ENCODE measurements at regions of chr12 and their contacts with region 1.

Region 1: GRCh38 chr12:109995686-109996482 is at the start of gene GIT2:
- DNase-seq: peak; percentile 87 to 98 (median 94)
- ATAC-seq: peak; percentile 76
- H3K4me3 ChIP-seq: peak within 1 kb of the TSS; percentile 79 to 89
- H3K4me3 Mint-ChIP-seq: peak within 1 kb of the TSS; percentile 97
- H3K27ac ChIP-seq: peak within 1 kb of the TSS; percentile 70 to 85
- H3K27ac Mint-ChIP-seq: peak within 1 kb of the TSS; percentile 89
- H3K4me1 ChIP-seq: peaks cover 34% of the 10 kb centered on the region
- H3K4me1 Mint-ChIP-seq: peaks cover 71% of the 10 kb centered on the region
- H3K27me3 ChIP-seq: no peaks in the 10 kb centered on the region
- H3K27me3 Mint-ChIP-seq: no peaks in the 10 kb centered on the region
- CTCF ChIP-seq: no peak
- total RNA-seq, gene GIT2: 47.6 to 57.9 TPM

Region 2: GRCh38 chr12:108731105-108731865 is 1264.6 kb before region 1 on chr12 and contains the start of gene CORO1C:
- CTCF ChIA-PET with region 1: no interaction called
- POLR2A ChIA-PET with region 1: no interaction called
- intact Hi-C with region 1: loop called in 1 of 2 experiments (anchors 5 kb)
- DNase-seq: peak; percentile 86 to 97 (median 92)
- ATAC-seq: peak; percentile 75
- H3K4me3 ChIP-seq: peak within 1 kb of the TSS; percentile 91 to 93
- H3K4me3 Mint-ChIP-seq: peak within 1 kb of the TSS; percentile 94
- H3K27ac ChIP-seq: peak within 1 kb of the TSS; percentile 67 to 85
- H3K27ac Mint-ChIP-seq: peak within 1 kb of the TSS; percentile 86
- H3K4me1 ChIP-seq: peaks cover 7% of the 10 kb centered on the region
- H3K4me1 Mint-ChIP-seq: peaks cover 26% of the 10 kb centered on the region
- H3K27me3 ChIP-seq: no peaks in the 10 kb centered on the region
- H3K27me3 Mint-ChIP-seq: no peaks in the 10 kb centered on the region
- CTCF ChIP-seq: peak; percentile 74
- total RNA-seq, gene CORO1C: 10.3 to 15.4 TPM

Region 3: GRCh38 chr12:109052414-109053323 is 943.2 kb before region 1 on chr12 and contains the start of gene USP30:
- CTCF ChIA-PET with region 1: no interaction called
- POLR2A ChIA-PET with region 1: no interaction called
- intact Hi-C with region 1: loop called in 1 of 2 experiments (anchors 5 kb)
- DNase-seq: peak; percentile 73 to 93 (median 85)
- ATAC-seq: peak; percentile 74
- H3K4me3 ChIP-seq: peak within 1 kb of the TSS; percentile 85 to 90
- H3K4me3 Mint-ChIP-seq: peak within 1 kb of the TSS; percentile 89
- H3K27ac ChIP-seq: peak within 1 kb of the TSS; percentile 68 to 91
- H3K27ac Mint-ChIP-seq: peak within 1 kb of the TSS; percentile 96
- H3K4me1 ChIP-seq: peaks cover 7% of the 10 kb centered on the region
- H3K4me1 Mint-ChIP-seq: peaks cover 21% of the 10 kb centered on the region
- H3K27me3 ChIP-seq: no peaks in the 10 kb centered on the region
- H3K27me3 Mint-ChIP-seq: no peaks in the 10 kb centered on the region
- CTCF ChIP-seq: no peak
- total RNA-seq, gene USP30: 28.2 to 33.1 TPM

Region 4: DNA sequence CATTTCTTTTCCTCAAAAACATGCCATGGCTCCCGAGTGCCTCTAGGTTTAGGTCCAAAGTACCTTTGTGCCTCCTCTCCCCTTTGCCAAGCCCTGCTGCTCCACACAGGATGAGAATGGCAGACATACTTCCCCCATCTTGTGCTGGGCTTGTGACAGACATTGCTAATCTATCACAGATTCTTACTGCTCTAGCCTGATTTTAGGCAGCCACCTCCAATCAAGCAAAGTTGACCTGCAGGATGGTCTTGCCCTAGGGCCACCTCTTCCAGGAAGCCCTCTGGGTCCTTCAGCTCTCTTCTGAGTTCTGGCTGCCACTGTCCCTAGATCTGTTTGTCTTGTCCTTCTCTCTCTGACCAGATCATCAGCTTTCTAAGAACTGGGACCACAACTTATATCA is 707.3 kb before region 1 on chr12:
- CTCF ChIA-PET with region 1: no interaction called
- POLR2A ChIA-PET with region 1: no interaction called
- intact Hi-C with region 1: no loop called
- DNase-seq: no peak
- ATAC-seq: no peak
- H3K4me3 ChIP-seq: no peak overlapping the region
- H3K4me3 Mint-ChIP-seq: no peak overlapping the region
- H3K27ac ChIP-seq: no peak overlapping the region
- H3K27ac Mint-ChIP-seq: no peak overlapping the region
- H3K4me1 ChIP-seq: no peaks in the 10 kb centered on the region
- H3K4me1 Mint-ChIP-seq: no peaks in the 10 kb centered on the region
- H3K27me3 ChIP-seq: peaks cover 0 to 3% of the 10 kb centered on the region in 2 experiments
- H3K27me3 Mint-ChIP-seq: peaks cover 19% of the 10 kb centered on the region
- CTCF ChIP-seq: no peak

Region 5: DNA sequence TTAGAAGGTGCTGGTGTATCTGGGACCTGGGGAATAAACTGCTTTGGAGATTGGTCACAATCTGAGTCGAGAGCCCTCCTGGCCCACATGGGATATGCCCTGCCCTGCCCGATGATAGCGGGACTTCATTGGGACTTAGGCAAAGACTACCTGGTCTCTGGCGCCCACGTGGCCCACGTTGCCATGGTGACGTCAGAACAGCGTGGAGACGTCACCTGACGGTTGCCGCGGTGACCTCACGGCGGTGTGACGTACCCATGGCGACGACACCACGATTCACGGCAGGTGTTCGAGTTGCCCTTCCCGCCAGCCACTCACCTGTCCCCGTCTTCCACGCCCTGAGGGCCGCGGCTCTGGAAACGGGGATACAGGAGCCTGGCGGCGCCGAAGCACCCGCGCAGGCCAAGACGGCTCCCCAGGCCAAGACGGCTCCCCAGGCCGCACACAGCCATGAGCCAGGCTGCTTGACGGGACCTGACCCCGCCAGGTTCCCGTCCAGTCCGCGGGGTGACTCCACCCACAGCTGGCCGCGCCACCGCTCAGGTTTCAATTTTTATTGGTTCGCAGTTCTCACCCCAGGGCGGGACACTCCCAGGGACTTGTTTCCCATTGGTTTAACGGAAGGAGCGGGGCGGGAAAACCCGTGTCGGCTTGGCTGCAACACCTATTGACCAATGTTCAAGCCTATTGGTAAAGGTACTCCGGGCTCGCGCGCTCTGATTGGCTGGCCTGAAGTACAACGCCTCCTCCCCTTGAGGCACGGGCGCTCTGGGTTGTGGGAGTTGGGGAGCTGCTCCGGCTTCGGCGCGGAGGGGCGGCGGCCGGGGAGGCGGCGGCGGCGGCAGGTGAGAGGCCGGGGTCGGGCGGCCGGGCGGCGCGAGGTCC is 422.6 kb before region 1 on chr12 and contains the starts of genes MMAB and MVK:
- CTCF ChIA-PET with region 1: no interaction called
- POLR2A ChIA-PET with region 1: no interaction called
- intact Hi-C with region 1: loop called (anchors 2 to 5 kb)
- DNase-seq: peak; percentile 96 to 99 (median 98)
- ATAC-seq: peak; percentile 92
- H3K4me3 ChIP-seq: peak within 1 kb of the TSS; percentile 73 to 82
- H3K4me3 Mint-ChIP-seq: peak within 1 kb of the TSS; percentile 95
- H3K27ac ChIP-seq: peak within 1 kb of the TSS; percentile 95
- H3K27ac Mint-ChIP-seq: peak within 1 kb of the TSS; percentile 96
- H3K4me1 ChIP-seq: peaks cover 16% of the 10 kb centered on the region
- H3K4me1 Mint-ChIP-seq: peaks cover 35% of the 10 kb centered on the region
- H3K27me3 ChIP-seq: no peaks in the 10 kb centered on the region
- H3K27me3 Mint-ChIP-seq: no peaks in the 10 kb centered on the region
- CTCF ChIP-seq: no peak
- total RNA-seq, gene MMAB: 10.2 to 11.7 TPM
- total RNA-seq, gene MVK: 11.5 to 13.9 TPM

Region 6: DNA sequence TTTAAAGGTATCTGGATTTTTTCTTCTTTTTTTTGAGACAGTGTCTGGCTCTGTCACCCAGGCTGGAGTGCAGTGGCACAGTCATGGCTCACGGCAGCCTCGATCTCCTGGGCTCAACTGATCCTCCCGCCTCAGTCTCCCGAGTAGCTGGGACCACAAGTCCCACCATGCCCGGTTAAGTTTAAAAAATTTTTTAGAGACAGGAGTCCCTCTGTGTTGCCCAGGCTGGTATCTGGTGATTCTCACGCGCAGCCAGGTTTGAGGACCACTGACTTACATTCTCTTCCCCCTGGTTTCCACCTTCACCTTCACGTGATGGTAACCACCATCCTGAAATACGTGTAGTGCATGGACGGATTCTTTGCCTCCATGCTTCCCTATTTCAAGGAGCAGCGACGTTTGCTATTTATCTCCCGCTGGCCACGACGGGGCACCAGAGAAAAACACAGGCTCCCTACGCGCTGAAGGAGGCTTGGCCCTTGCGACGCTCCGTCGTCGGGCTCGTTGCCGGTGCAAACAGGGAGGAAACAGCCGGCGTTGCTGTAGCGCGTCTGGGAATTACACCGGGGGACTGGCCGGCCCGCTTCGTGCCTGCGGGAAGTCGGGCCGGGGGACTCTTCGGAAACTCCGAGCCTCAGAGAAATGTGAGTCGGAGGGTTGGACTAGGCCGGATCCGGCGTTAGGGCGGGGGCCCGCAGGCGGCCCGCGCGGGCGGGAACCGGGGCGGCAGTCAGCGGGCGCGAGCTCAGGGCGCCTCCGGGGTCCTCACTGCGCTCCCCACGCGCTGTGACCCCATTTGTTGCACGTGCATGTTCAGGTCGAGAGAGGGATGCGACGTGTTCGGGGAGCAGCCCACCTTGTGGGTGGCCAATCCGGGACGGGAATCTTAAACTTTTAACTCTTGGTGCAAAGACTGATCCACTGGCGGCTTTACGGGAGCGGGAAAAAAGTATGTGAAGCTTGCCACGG is 95.8 kb before region 1 on chr12 and contains the start of gene TCHP:
- CTCF ChIA-PET with region 1: no interaction called
- POLR2A ChIA-PET with region 1: no interaction called
- intact Hi-C with region 1: loop called (anchors 5 kb)
- DNase-seq: peak; percentile 35 to 91 (median 72)
- ATAC-seq: peak; percentile 90
- H3K4me3 ChIP-seq: peak within 1 kb of the TSS; percentile 79 to 86
- H3K4me3 Mint-ChIP-seq: peak within 1 kb of the TSS; percentile 95
- H3K27ac ChIP-seq: peak within 1 kb of the TSS; percentile 65 to 69
- H3K27ac Mint-ChIP-seq: peak within 1 kb of the TSS; percentile 97
- H3K4me1 ChIP-seq: peaks cover 17% of the 10 kb centered on the region
- H3K4me1 Mint-ChIP-seq: peaks cover 28% of the 10 kb centered on the region
- H3K27me3 ChIP-seq: no peaks in the 10 kb centered on the region
- H3K27me3 Mint-ChIP-seq: no peaks in the 10 kb centered on the region
- CTCF ChIP-seq: no peak
- total RNA-seq, gene TCHP: 11.4 to 15.7 TPM

Region 7: DNA sequence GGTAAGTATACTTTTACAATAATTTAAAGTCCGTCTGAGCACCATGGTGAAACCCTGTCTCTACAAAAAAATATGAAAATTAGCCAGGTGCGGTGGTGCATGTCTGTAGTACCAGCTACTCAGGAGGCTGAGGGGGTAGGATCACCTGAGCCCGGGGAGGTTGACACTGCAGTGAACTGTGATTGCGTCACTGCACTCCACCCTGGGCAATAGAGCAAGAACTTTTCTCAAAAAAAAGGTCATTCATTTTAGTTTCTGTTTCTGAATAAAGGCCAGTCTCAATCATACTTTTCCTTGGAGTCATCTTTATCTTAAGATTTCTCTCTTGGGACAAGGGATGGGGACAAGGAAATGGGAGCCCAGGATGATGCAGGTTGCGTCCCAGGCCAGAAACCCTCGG is 16.3 kb after region 1 on chr12:
- CTCF ChIA-PET with region 1: no interaction called
- POLR2A ChIA-PET with region 1: interaction called, 4 read pairs
- intact Hi-C with region 1: loop called (anchors 2 kb)
- DNase-seq: peak in 3 of 9 experiments; percentile 30 to 47 (median 33)
- ATAC-seq: peak; percentile 62
- H3K4me3 ChIP-seq: no peak overlapping the region
- H3K4me3 Mint-ChIP-seq: no peak overlapping the region
- H3K27ac ChIP-seq: no peak overlapping the region
- H3K27ac Mint-ChIP-seq: peak overlapping the region; percentile 76
- H3K4me1 ChIP-seq: peaks cover 12% of the 10 kb centered on the region
- H3K4me1 Mint-ChIP-seq: peaks cover 43% of the 10 kb centered on the region
- H3K27me3 ChIP-seq: no peaks in the 10 kb centered on the region
- H3K27me3 Mint-ChIP-seq: no peaks in the 10 kb centered on the region
- CTCF ChIP-seq: no peak

Region 8: DNA sequence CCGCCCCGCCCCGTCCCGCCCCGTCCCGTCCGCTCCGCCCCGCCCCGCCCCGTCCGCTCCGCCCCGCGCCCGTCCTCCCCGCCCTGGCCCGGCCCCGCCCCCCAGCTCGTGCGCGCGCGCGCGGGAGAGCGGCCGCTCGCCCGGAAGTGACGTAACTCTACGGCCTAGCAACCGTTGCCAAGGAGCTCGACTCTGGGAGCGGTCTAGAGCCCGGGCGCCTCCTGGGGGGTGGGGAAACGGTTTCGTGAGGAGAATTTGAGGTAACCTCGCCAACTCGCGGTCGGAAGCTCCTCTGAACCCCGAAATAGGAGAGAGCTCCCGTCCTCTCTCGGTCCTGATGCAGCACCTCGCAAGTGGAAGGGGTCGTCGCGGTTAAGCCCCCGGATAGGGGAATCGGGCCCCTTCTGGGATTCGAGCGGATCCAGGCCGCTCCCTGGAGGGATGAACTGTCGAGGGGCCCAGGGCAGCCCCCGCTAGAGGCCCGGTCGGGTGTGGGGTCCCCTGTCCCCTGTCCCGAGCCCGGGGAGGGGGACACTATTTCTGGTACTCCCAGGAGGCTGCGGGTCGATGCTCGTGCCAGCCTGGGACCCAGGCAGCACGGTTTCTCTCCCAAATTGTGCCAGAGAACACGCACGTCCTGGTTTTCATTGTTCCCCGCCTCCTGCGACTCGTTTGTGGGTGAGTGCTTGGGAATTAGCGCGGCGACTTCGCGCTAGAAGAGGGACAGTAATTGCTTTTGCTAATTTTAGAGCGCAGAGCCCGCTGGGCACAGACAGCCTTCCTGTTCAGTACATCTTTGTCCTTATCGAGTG is 128.5 kb after region 1 on chr12 and contains the start of gene IFT81:
- CTCF ChIA-PET with region 1: no interaction called
- POLR2A ChIA-PET with region 1: no interaction called
- intact Hi-C with region 1: loop called (anchors 2 kb)
- DNase-seq: peak; percentile 94 to 99 (median 96)
- ATAC-seq: peak; percentile 95
- H3K4me3 ChIP-seq: peak within 1 kb of the TSS; percentile 69 to 96
- H3K4me3 Mint-ChIP-seq: peak within 1 kb of the TSS; percentile 91
- H3K27ac ChIP-seq: peak within 1 kb of the TSS; percentile 60 to 73
- H3K27ac Mint-ChIP-seq: peak within 1 kb of the TSS; percentile 83
- H3K4me1 ChIP-seq: peaks cover 10% of the 10 kb centered on the region
- H3K4me1 Mint-ChIP-seq: peaks cover 8% of the 10 kb centered on the region
- H3K27me3 ChIP-seq: no peaks in the 10 kb centered on the region
- H3K27me3 Mint-ChIP-seq: peaks cover 3% of the 10 kb centered on the region
- CTCF ChIP-seq: no peak
- total RNA-seq, gene IFT81: 0.25 to 0.43 TPM